ENCODE measurements at regions of chr2 and their contacts with region 1.

Region 1: GRCh38 chr2:202178342-202178958 is 59.9 kb downstream of the SUMO1 start:
- DNase-seq: peak in 8 of 9 donors; percentile 25 to 64 (median 50)
- ATAC-seq: peak; percentile 80
- H3K4me3 ChIP-seq: no peak overlapping the region
- H3K4me3 Mint-ChIP-seq: no peak overlapping the region
- H3K27ac ChIP-seq: no peak overlapping the region
- H3K27ac Mint-ChIP-seq: no peak overlapping the region
- H3K4me1 ChIP-seq: no peaks in the 10 kb centered on the region
- H3K4me1 Mint-ChIP-seq: peaks cover 0 to 14% (median 0%) of the 10 kb centered on the region in 7 donors
- H3K27me3 ChIP-seq: no peaks in the 10 kb centered on the region
- H3K27me3 Mint-ChIP-seq: peaks cover 0 to 19% (median 0%) of the 10 kb centered on the region in 5 donors

Region 2: GRCh38 chr2:201660293-201660895 is 518.1 kb before region 1 on chr2:
- CTCF ChIA-PET with region 1: no interaction called
- POLR2A ChIA-PET with region 1: no interaction called
- intact Hi-C with region 1: loop called in 1 of 2 experiments (anchors 1 kb)
- DNase-seq: no peak
- ATAC-seq: no peak
- H3K4me3 ChIP-seq: no peak overlapping the region
- H3K4me3 Mint-ChIP-seq: no peak overlapping the region
- H3K27ac ChIP-seq: no peak overlapping the region
- H3K27ac Mint-ChIP-seq: no peak overlapping the region
- H3K4me1 ChIP-seq: no peaks in the 10 kb centered on the region
- H3K4me1 Mint-ChIP-seq: peaks cover 0 to 1% (median 0%) of the 10 kb centered on the region in 7 donors
- H3K27me3 ChIP-seq: no peaks in the 10 kb centered on the region
- H3K27me3 Mint-ChIP-seq: peaks cover 0 to 21% (median 0%) of the 10 kb centered on the region in 5 donors

Region 3: GRCh38 chr2:201754717-201755415 is 423.6 kb before region 1 on chr2:
- CTCF ChIA-PET with region 1: interaction called, 4 read pairs
- POLR2A ChIA-PET with region 1: no interaction called
- intact Hi-C with region 1: loop called (anchors 1 to 5 kb)
- DNase-seq: no peak
- ATAC-seq: no peak
- H3K4me3 ChIP-seq: no peak overlapping the region
- H3K4me3 Mint-ChIP-seq: no peak overlapping the region
- H3K27ac ChIP-seq: no peak overlapping the region
- H3K27ac Mint-ChIP-seq: no peak overlapping the region
- H3K4me1 ChIP-seq: no peaks in the 10 kb centered on the region
- H3K4me1 Mint-ChIP-seq: no peaks in the 10 kb centered on the region
- H3K27me3 ChIP-seq: no peaks in the 10 kb centered on the region
- H3K27me3 Mint-ChIP-seq: no peaks in the 10 kb centered on the region

Region 4: GRCh38 chr2:201860636-201861066 is 317.8 kb before region 1 on chr2:
- CTCF ChIA-PET with region 1: interaction called, 48 read pairs
- POLR2A ChIA-PET with region 1: interaction called, 3 read pairs
- intact Hi-C with region 1: loop called (anchors 1 kb)
- DNase-seq: peak in 8 of 9 donors; percentile 15 to 60 (median 36)
- ATAC-seq: peak; percentile 75
- H3K4me3 ChIP-seq: no peak overlapping the region
- H3K4me3 Mint-ChIP-seq: peak overlapping the region in 6 of 10 donors; percentile 15 to 57 (median 26)
- H3K27ac ChIP-seq: no peak overlapping the region
- H3K27ac Mint-ChIP-seq: no peak overlapping the region
- H3K4me1 ChIP-seq: peaks cover 0 to 8% of the 10 kb centered on the region in 2 donors
- H3K4me1 Mint-ChIP-seq: peaks cover 13 to 24% (median 20%) of the 10 kb centered on the region in 7 donors
- H3K27me3 ChIP-seq: no peaks in the 10 kb centered on the region
- H3K27me3 Mint-ChIP-seq: peaks cover 7 to 47% (median 30%) of the 10 kb centered on the region in 5 donors

Region 5: GRCh38 chr2:202009019-202009481 is 169.4 kb before region 1 on chr2:
- CTCF ChIA-PET with region 1: no interaction called
- POLR2A ChIA-PET with region 1: no interaction called
- intact Hi-C with region 1: no loop called
- DNase-seq: no peak
- ATAC-seq: no peak
- H3K4me3 ChIP-seq: no peak overlapping the region
- H3K4me3 Mint-ChIP-seq: no peak overlapping the region
- H3K27ac ChIP-seq: no peak overlapping the region
- H3K27ac Mint-ChIP-seq: no peak overlapping the region
- H3K4me1 ChIP-seq: no peaks in the 10 kb centered on the region
- H3K4me1 Mint-ChIP-seq: no peaks in the 10 kb centered on the region
- H3K27me3 ChIP-seq: peaks cover 0 to 3% of the 10 kb centered on the region in 2 donors
- H3K27me3 Mint-ChIP-seq: peaks cover 15 to 37% (median 23%) of the 10 kb centered on the region in 5 donors

Region 6: GRCh38 chr2:202033321-202034248 is 144.9 kb before region 1 on chr2 and contains the start of gene FZD7:
- CTCF ChIA-PET with region 1: no interaction called
- POLR2A ChIA-PET with region 1: no interaction called
- intact Hi-C with region 1: loop called (anchors 2 to 10 kb)
- DNase-seq: peak; percentile 70 to 87 (median 81)
- ATAC-seq: peak; percentile 92
- H3K4me3 ChIP-seq: peak within 1 kb of the TSS; percentile 91
- H3K4me3 Mint-ChIP-seq: peak within 1 kb of the TSS in 9 of 10 donors; percentile 87 to 96 (median 92)
- H3K27ac ChIP-seq: peak within 1 kb of the TSS; percentile 44
- H3K27ac Mint-ChIP-seq: peak within 1 kb of the TSS in 8 of 9 donors; percentile 46 to 83 (median 72)
- H3K4me1 ChIP-seq: peaks cover 9 to 11% of the 10 kb centered on the region in 2 donors
- H3K4me1 Mint-ChIP-seq: peaks cover 6 to 17% (median 14%) of the 10 kb centered on the region in 7 donors
- H3K27me3 ChIP-seq: peaks cover 6 to 22% of the 10 kb centered on the region in 2 donors
- H3K27me3 Mint-ChIP-seq: peaks cover 0 to 45% (median 7%) of the 10 kb centered on the region in 5 donors
- total RNA-seq, gene FZD7: 0.27 to 0.99 (median 0.43) TPM

Region 7: GRCh38 chr2:202104278-202104870 is 74.1 kb before region 1 on chr2:
- CTCF ChIA-PET with region 1: no interaction called
- POLR2A ChIA-PET with region 1: no interaction called
- intact Hi-C with region 1: loop called in 1 of 2 experiments (anchors 1 kb)
- DNase-seq: peak in 1 of 9 donors; percentile 54
- ATAC-seq: peak; percentile 36
- H3K4me3 ChIP-seq: no peak overlapping the region
- H3K4me3 Mint-ChIP-seq: no peak overlapping the region
- H3K27ac ChIP-seq: no peak overlapping the region
- H3K27ac Mint-ChIP-seq: no peak overlapping the region
- H3K4me1 ChIP-seq: no peaks in the 10 kb centered on the region
- H3K4me1 Mint-ChIP-seq: no peaks in the 10 kb centered on the region
- H3K27me3 ChIP-seq: no peaks in the 10 kb centered on the region
- H3K27me3 Mint-ChIP-seq: peaks cover 0 to 15% (median 9%) of the 10 kb centered on the region in 5 donors

Region 8: DNA sequence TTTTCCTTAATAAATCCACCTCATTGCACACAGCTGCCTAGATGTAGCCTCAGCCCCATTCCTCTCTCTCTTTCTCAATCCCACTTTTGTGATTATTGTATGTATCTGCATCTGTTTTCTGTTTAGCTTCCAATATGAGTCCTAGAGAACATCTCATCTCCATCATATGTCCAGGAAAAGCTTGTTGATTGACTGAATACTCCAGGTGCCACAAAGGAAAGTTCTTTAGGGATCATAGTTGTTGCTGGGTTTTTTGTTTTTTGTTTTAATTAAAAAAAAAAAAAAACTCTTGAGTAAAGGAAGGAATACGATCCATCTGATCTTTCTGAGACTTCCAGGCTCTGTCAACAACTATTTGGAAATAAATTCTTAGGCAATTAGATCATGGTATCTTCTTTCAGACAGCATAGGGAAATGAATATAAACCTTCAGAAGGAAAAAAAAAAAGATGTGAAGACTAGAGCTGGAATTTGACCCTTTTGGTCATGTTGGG is 62.9 kb before region 1 on chr2:
- CTCF ChIA-PET with region 1: no interaction called
- POLR2A ChIA-PET with region 1: no interaction called
- intact Hi-C with region 1: no loop called
- DNase-seq: no peak
- ATAC-seq: no peak
- H3K4me3 ChIP-seq: no peak overlapping the region
- H3K4me3 Mint-ChIP-seq: no peak overlapping the region
- H3K27ac ChIP-seq: no peak overlapping the region
- H3K27ac Mint-ChIP-seq: no peak overlapping the region
- H3K4me1 ChIP-seq: no peaks in the 10 kb centered on the region
- H3K4me1 Mint-ChIP-seq: no peaks in the 10 kb centered on the region
- H3K27me3 ChIP-seq: no peaks in the 10 kb centered on the region
- H3K27me3 Mint-ChIP-seq: peaks cover 13 to 39% (median 22%) of the 10 kb centered on the region in 5 donors

Measured in naive thymus-derived CD4-positive, alpha-beta T cell (primary cell).